Sciatic nerve (tissue), 2 donors: ENCODE measurements at regions of chr18 and their contacts with region 1.

Region 1: DNA sequence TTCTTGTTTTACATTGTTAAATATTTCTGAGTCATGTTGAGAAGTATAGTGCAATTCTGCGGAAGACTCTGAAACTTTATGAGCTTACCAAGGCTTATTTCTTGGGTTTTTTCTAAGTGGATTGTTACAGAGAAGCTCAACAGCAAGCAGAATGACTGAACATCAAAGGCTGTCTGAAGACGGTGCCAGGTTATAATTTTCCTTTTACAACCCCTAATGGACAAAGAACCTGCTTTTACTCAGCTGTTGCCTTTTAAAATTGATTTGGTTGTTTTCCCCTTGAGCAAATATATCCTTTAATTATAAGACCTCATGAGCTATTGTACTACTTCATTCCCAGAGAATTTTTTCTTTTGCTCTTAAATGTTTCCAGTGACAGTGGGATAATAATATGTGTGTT is 41.6 kb downstream of the LAMA3 start:
- DNase-seq: no peak
- ATAC-seq: no peak

Region 2: GRCh38 chr18:23772327-23773024 is 41.6 kb after region 1 on chr18:
- intact Hi-C with region 1: no loop called
- DNase-seq: no peak
- ATAC-seq: no peak

Region 3: DNA sequence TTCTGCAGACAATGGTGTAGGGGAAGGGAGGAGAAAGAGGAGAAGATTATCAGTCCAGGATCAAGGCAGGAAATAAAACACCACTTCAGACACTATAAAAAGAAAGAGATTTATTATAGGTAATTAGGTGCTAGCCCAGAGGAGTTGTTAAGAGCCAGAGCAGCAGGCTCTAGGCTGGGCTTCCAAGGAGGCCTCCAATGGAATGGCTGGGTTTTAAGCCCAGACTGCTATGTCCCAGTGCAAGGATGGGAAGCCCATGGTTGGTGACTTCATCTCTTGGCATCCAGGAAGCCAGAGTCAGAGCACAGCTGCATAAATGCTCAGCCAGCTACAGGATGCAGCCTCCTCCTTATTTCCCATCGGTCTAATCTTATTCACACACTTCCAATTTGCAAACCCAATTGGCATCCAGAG is 54.0 kb after region 1 on chr18:
- intact Hi-C with region 1: loop called (anchors 5 kb)
- DNase-seq: no peak
- ATAC-seq: no peak